ENCODE measurements at regions of chr10 and their contacts with region 1.

Region 1: GRCh38 chr10:72354478-72355213 is at the start of gene DNAJB12:
- DNase-seq: peak; percentile 89 to 95 (median 92)
- H3K4me3 ChIP-seq: peak within 1 kb of the TSS; percentile 50 to 85 (median 80)
- H3K27ac ChIP-seq: peak within 1 kb of the TSS; percentile 89 to 98 (median 95)
- H3K4me1 ChIP-seq: peaks cover 13 to 23% of the 10 kb centered on the region in 2 donors
- H3K27me3 ChIP-seq: no peaks in the 10 kb centered on the region
- CTCF ChIP-seq: peak in 1 of 6 experiments; percentile 4
- POLR2A ChIP-seq: peak; percentile 81 to 83
- total RNA-seq, gene DNAJB12: 36.3 to 67.0 (median 49.2) TPM

Region 2: DNA sequence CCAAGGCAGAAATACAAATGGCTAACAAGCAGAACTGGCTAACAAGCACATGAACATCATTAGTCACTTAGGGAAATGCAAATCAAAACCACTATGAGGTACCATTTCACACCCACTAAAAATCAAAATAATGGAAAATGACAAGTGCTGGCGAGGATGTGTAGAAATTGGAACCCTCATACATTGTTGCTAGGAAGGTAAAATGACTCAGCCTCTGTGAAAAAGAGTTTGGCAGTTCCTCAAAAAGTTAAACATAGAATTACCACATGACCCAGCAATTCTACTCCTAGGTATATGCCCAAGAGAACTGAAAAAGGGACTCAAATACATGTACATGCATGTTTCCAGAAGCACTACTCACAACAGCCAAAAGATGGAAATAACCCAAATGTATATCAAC is 191.7 kb before region 1 on chr10:
- intact Hi-C with region 1: loop called in 1 of 2 experiments (anchors 5 kb)
- DNase-seq: no peak
- H3K4me3 ChIP-seq: no peak overlapping the region
- H3K27ac ChIP-seq: no peak overlapping the region
- H3K4me1 ChIP-seq: no peaks in the 10 kb centered on the region
- H3K27me3 ChIP-seq: no peaks in the 10 kb centered on the region
- CTCF ChIP-seq: no peak
- POLR2A ChIP-seq: no peak

Region 3: GRCh38 chr10:72736176-72736827 is 381.7 kb after region 1 on chr10:
- intact Hi-C with region 1: no loop called
- DNase-seq: no peak
- H3K4me3 ChIP-seq: no peak overlapping the region
- H3K27ac ChIP-seq: no peak overlapping the region
- H3K4me1 ChIP-seq: peaks cover 0 to 36% of the 10 kb centered on the region in 2 donors
- H3K27me3 ChIP-seq: no peaks in the 10 kb centered on the region
- CTCF ChIP-seq: no peak
- POLR2A ChIP-seq: no peak

Measured in adrenal gland (tissue), 19 donors.